H1 (cell line): ENCODE measurements at regions of chr5 and their contacts with region 1.

Region 1: DNA sequence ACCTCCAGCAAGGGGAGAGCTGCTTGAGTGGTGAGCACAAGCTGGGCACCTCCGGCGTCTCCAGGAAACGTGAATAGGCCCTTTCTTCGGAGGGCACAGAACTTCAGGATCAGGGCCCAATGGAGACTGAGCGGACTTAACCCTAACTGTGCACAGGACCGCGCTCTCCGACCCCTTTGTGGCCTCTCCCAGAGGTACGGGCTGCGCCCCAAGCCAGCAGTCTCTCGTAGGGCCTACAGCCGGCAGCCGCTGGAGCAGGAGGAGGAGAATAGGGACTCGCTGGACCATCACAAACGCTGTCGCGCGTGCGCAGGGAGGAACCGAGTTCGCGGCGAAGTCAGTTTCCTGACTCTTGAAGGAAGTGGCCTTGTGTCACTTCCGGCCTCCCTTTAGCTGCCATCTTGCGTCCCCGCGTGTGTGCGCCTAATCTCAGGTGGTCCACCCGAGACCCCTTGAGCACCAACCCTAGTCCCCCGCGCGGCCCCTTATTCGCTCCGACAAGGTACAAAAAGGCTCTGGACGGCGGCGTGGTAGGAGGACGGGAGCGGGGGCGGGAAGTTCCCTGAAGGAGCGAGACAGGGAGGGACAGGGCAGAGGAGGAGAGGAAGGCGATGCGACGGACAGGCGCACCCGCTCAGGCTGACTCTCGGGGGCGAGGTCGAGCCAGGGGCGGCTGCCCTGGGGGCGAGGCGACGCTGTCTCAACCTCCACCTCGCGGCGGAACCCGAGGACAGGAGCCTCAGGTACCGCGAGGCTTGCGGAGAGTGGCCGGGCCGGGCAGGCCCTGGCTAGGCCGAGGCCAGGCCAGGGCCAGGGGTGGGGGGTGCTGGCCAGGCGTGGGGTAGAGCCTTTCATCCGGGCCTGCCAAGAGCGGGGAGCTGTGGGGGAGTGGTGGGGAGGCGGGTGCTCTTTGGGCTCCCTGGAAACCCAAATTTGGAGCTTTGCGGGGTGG is at the start of gene BTF3:
- DNase-seq: peak; percentile 70 to 89
- H3K4me3 ChIP-seq: peak within 1 kb of the TSS; percentile 78 to 87 (median 82)
- H3K27ac ChIP-seq: peak within 1 kb of the TSS; percentile 97
- H3K4me1 ChIP-seq: peaks cover 1 to 12% (median 4%) of the 10 kb centered on the region in 4 experiments; a peak in 6 of 7 replicates
- H3K27me3 ChIP-seq: no peaks in the 10 kb centered on the region
- CTCF ChIP-seq: peak in 2 of 3 experiments; percentile 2 to 5; a peak in 1 of 4 replicates
- EP300 ChIP-seq: no peak
- POLR2A ChIP-seq: peak; percentile 42 to 91
- RAD21 ChIP-seq: peak in 1 of 2 experiments; percentile 13; a peak in 2 of 4 replicates
- total RNA-seq, gene BTF3: 754 and 760 TPM in 2 replicates

Region 2: GRCh38 chr5:73448463-73449136 is 49.7 kb before region 1 on chr5 and contains the start of gene FOXD1:
- CTCF ChIA-PET with region 1: interaction called, 53 read pairs
- POLR2A ChIA-PET with region 1: interaction called, 25 read pairs
- DNase-seq: peak in 1 of 2 experiments; percentile 88
- H3K4me3 ChIP-seq: peak within 1 kb of the TSS; percentile 22 to 62 (median 41)
- H3K27ac ChIP-seq: no peak within 1 kb of the TSS
- H3K4me1 ChIP-seq: peaks cover 6 to 19% (median 12%) of the 10 kb centered on the region in 4 experiments
- H3K27me3 ChIP-seq: peaks cover 67 to 94% (median 80%) of the 10 kb centered on the region in 4 experiments
- CTCF ChIP-seq: peak in 1 of 3 experiments; percentile 4; a peak in 1 of 4 replicates
- EP300 ChIP-seq: no peak
- POLR2A ChIP-seq: no peak
- RAD21 ChIP-seq: peak in 1 of 2 experiments; percentile 20; a peak in 1 of 4 replicates
- total RNA-seq, gene FOXD1: 0.73 and 1.1 TPM in 2 replicates

Region 3: GRCh38 chr5:73464016-73464745 is 34.2 kb before region 1 on chr5:
- CTCF ChIA-PET with region 1: interaction called, 3 read pairs
- POLR2A ChIA-PET with region 1: interaction called, 23 read pairs
- DNase-seq: no peak
- H3K4me3 ChIP-seq: no peak overlapping the region
- H3K27ac ChIP-seq: no peak overlapping the region
- H3K4me1 ChIP-seq: peaks cover 2 to 23% (median 4%) of the 10 kb centered on the region in 4 experiments; a peak in 5 of 7 replicates
- H3K27me3 ChIP-seq: no peaks in the 10 kb centered on the region
- CTCF ChIP-seq: no peak
- EP300 ChIP-seq: no peak
- POLR2A ChIP-seq: no peak
- RAD21 ChIP-seq: no peak

Region 4: GRCh38 chr5:73482383-73483136 is 15.8 kb before region 1 on chr5:
- CTCF ChIA-PET with region 1: interaction called, 17 read pairs
- POLR2A ChIA-PET with region 1: interaction called, 170 read pairs
- DNase-seq: no peak
- H3K4me3 ChIP-seq: no peak overlapping the region
- H3K27ac ChIP-seq: no peak overlapping the region
- H3K4me1 ChIP-seq: peaks cover 8 to 15% (median 13%) of the 10 kb centered on the region in 4 experiments
- H3K27me3 ChIP-seq: no peaks in the 10 kb centered on the region
- CTCF ChIP-seq: no peak
- EP300 ChIP-seq: no peak
- POLR2A ChIP-seq: no peak
- RAD21 ChIP-seq: no peak

Region 5: GRCh38 chr5:73531356-73531755 is 33.0 kb after region 1 on chr5:
- CTCF ChIA-PET with region 1: interaction called, 3 read pairs
- POLR2A ChIA-PET with region 1: interaction called, 11 read pairs
- DNase-seq: no peak
- H3K4me3 ChIP-seq: no peak overlapping the region
- H3K27ac ChIP-seq: no peak overlapping the region
- H3K4me1 ChIP-seq: 0 out of 7 replicates have a peak, but pooled peaks cover 0 to 4% (median 0%) of the 10 kb centered on the region in 4 experiments
- H3K27me3 ChIP-seq: no peaks in the 10 kb centered on the region
- CTCF ChIP-seq: no peak
- EP300 ChIP-seq: no peak
- POLR2A ChIP-seq: no peak
- RAD21 ChIP-seq: no peak